PC-3 (cell line): ENCODE measurements at regions of chr9 and their contacts with region 1.

Region 1: DNA sequence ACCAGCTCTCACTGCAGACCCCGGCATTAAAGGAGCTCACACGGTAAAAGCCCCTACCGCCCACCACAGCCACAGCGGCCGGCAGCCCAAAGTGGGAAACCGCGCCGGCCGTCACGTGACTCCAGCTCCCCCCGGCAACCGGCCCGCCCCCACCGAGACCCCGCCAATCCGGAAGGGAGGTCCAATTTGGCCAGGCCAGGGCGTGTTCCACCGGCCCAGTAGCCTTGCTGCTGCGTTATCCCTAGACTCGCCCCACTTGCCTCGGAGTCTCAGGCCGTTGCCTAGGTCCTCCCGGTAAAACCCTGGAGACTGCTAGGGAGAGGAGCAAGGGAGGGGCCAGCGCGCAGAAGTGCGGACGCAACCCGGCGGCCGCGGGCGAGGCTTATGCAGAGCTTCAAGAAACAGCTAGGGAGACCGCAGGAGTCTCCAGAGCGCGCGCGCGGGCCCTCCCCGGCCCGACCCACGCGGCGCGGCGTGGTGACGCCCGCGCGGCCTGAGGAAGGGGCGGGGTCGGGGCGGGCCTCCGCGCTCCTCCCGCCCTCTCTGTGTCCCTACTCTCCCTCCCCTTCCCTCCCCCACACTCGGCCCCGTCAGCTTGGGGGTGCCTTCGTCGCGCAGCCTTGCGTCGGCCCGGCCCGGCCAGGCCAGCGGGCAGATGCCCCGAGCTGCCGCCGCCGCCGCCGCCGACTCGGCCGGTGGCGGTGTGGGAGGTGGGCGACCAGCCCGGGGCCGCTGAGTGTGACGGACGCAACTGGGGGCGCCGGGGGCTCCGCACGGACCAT is at the start of gene RIC1:
- DNase-seq: peak; percentile 85
- ATAC-seq: peak; percentile 83
- H3K4me3 ChIP-seq: peak within 1 kb of the TSS; percentile 76
- H3K27ac ChIP-seq: peak within 1 kb of the TSS; percentile 81
- H3K4me1 ChIP-seq: peaks cover 44% of the 10 kb centered on the region
- H3K27me3 ChIP-seq: no peaks in the 10 kb centered on the region
- CTCF ChIP-seq: no peak
- total RNA-seq, gene RIC1: 13.3 and 16.0 TPM in 2 replicates

Region 2: DNA sequence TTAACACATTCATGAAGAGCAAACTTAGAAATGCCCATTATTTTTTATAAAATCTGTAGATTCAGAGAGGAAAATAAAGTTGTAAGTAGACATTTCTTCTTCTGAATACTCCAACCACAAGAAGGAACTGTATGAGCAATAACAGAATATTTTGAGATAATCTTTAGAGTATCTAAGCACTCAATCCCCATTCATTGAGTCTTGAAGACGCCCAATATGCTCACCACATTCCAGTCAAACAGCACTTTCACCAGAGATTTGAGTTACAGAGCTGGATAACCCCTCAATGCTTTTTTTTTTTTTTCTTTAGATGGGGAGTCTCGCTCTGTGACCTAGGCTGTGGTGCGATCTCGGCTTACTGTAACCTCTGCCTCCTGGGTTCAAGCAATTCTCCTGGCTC is 14.5 kb before region 1 on chr9:
- CTCF ChIA-PET with region 1: no interaction called
- POLR2A ChIA-PET with region 1: interaction called, 20 read pairs
- intact Hi-C with region 1: no loop called
- DNase-seq: no peak
- ATAC-seq: no peak
- H3K4me3 ChIP-seq: no peak overlapping the region
- H3K27ac ChIP-seq: no peak overlapping the region
- H3K4me1 ChIP-seq: no peaks in the 10 kb centered on the region
- H3K27me3 ChIP-seq: no peaks in the 10 kb centered on the region
- CTCF ChIP-seq: no peak

Region 3: GRCh38 chr9:5786370-5787127 is 157.8 kb after region 1 on chr9:
- CTCF ChIA-PET with region 1: no interaction called
- POLR2A ChIA-PET with region 1: no interaction called
- intact Hi-C with region 1: loop called (anchors 10 kb)
- DNase-seq: no peak
- ATAC-seq: peak; percentile 37; the same call in 1 of the 2 replicates
- H3K4me3 ChIP-seq: no peak overlapping the region
- H3K27ac ChIP-seq: no peak overlapping the region
- H3K4me1 ChIP-seq: peaks cover 5% of the 10 kb centered on the region
- H3K27me3 ChIP-seq: no peaks in the 10 kb centered on the region
- CTCF ChIP-seq: no peak

Region 4: GRCh38 chr9:6049798-6050197 is 421.1 kb after region 1 on chr9:
- CTCF ChIA-PET with region 1: no interaction called
- POLR2A ChIA-PET with region 1: no interaction called
- intact Hi-C with region 1: no loop called
- DNase-seq: peak; percentile 55
- ATAC-seq: no peak
- H3K4me3 ChIP-seq: no peak overlapping the region
- H3K27ac ChIP-seq: no peak overlapping the region
- H3K4me1 ChIP-seq: peaks cover 6% of the 10 kb centered on the region
- H3K27me3 ChIP-seq: no peaks in the 10 kb centered on the region
- CTCF ChIP-seq: peak; percentile 71